Panc1 (cell line): ENCODE measurements at regions of chr5 and their contacts with region 1.

Region 1: DNA sequence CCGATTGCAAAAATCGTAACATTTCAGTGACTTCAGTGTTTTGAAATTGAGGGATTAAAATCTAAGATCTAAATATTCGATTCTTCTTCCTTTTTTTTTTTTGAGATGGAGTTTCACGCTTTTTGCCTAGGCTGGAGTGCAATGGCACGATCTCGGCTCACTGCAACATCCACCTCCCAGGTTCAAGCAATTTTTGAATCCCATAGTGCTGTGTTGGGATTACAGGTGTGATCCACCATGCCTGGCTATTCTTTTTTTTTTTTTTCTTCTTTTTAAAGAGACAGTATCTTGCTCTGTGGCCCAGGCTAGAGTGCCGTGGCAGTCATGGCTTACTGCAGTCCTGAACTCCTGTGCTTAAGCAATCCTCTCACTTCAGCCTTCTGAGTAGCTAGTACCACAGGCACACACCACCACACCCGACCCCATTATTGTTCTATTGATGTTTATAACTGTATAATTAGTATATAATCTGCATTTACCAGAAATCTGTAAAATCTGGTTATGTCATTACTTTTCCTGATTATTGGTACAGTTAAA is 42.7 kb downstream of the NSD1 start:
- DNase-seq: no peak
- ATAC-seq: no peak
- H3K4me3 ChIP-seq: no peak overlapping the region
- H3K27ac ChIP-seq: no peak overlapping the region
- H3K4me1 ChIP-seq: no peaks in the 10 kb centered on the region
- H3K27me3 ChIP-seq: no peaks in the 10 kb centered on the region
- CTCF ChIP-seq: no peak

Region 2: GRCh38 chr5:176851871-176852658 is 324.2 kb before region 1 on chr5:
- CTCF ChIA-PET with region 1: no interaction called
- POLR2A ChIA-PET with region 1: no interaction called
- in situ Hi-C with region 1: no loop called
- intact Hi-C with region 1: no loop called
- DNase-seq: no peak
- ATAC-seq: no peak
- H3K4me3 ChIP-seq: no peak overlapping the region
- H3K27ac ChIP-seq: no peak overlapping the region
- H3K4me1 ChIP-seq: no peaks in the 10 kb centered on the region
- H3K27me3 ChIP-seq: no peaks in the 10 kb centered on the region; the same call in 1 of the 2 replicates
- CTCF ChIP-seq: no peak

Region 3: DNA sequence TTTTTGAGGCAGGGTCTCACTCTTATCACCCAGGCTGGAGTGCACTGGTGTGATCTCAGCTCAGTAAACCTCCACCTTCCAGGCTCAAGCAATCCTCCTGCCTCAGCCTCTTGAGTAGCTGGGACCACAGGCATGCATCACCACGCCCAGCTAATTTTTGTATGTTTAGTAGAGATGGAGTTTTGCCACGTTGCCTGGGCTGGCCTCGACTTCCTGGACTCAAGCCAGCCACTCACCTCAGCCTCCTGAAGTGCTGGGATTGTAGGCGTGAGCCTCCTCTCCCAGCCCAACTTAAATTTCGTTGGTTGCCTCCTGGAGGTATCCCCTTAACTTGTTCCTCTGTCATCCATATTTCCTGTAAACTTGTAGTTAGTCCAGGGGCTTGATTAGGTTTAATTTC is 80.1 kb after region 1 on chr5:
- CTCF ChIA-PET with region 1: interaction called, 15 read pairs
- POLR2A ChIA-PET with region 1: no interaction called
- in situ Hi-C with region 1: no loop called
- intact Hi-C with region 1: no loop called
- DNase-seq: no peak
- ATAC-seq: no peak
- H3K4me3 ChIP-seq: no peak overlapping the region
- H3K27ac ChIP-seq: no peak overlapping the region
- H3K4me1 ChIP-seq: no peaks in the 10 kb centered on the region
- H3K27me3 ChIP-seq: no peaks in the 10 kb centered on the region
- CTCF ChIP-seq: no peak